Activated CD4-positive, alpha-beta memory T cell treated with anti-CD3 and anti-CD28 coated beads for 36 hours (primary cell): ENCODE measurements at regions of chr7 and their contacts with region 1.

Region 1: GRCh38 chr7:148773334-148773733 is 74.6 kb downstream of the CUL1 start:
- DNase-seq: peak; percentile 57
- H3K4me3 Mint-ChIP-seq: no peak overlapping the region
- H3K27ac Mint-ChIP-seq: peak overlapping the region; percentile 86
- H3K4me1 Mint-ChIP-seq: peaks cover 28% of the 10 kb centered on the region
- H3K27me3 Mint-ChIP-seq: no peaks in the 10 kb centered on the region

Region 2: GRCh38 chr7:148575640-148576411 is 197.5 kb before region 1 on chr7:
- CTCF ChIA-PET with region 1: interaction called, 18 read pairs
- POLR2A ChIA-PET with region 1: no interaction called
- intact Hi-C with region 1: loop called (anchors 5 kb)
- DNase-seq: peak; percentile 80
- H3K4me3 Mint-ChIP-seq: no peak overlapping the region
- H3K27ac Mint-ChIP-seq: no peak overlapping the region
- H3K4me1 Mint-ChIP-seq: peaks cover 6% of the 10 kb centered on the region
- H3K27me3 Mint-ChIP-seq: peaks cover 6% of the 10 kb centered on the region

Region 3: DNA sequence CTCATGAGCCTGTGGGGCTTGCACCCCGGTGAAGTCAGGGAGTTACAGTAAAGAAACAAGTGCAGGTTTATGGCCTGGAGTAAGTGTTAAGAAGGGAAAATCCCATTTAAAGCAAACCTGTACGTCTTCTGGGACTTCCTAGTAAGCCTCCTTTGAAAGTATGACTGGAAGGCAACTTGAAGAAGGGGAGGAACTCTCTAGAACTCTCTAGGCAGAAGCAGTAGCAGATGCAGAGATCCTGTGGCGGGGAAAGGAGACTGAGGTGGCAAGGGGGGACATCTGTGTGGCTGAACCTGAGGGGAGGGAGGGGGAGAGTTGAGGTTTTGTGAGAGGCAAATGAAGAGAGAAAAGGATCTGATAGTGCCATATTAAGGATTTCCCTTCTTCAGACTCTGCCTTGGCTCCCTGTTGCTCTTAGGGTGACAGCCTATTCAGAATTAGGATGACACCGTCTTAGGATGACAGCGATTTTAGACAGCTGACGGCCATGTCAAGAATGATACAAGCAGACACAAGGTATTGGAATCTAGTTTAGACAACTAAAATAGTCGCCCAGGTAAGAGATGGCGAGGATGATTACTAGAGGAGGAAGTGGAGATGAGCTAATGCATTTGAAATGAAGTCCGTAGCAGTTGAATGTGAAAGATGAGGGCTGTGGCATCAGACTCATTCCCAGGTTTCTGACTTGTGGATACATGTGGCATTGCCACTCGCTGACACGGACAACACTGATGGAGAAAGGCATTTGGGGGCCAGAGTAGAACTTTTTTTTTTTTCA is 45.6 kb before region 1 on chr7:
- CTCF ChIA-PET with region 1: no interaction called
- POLR2A ChIA-PET with region 1: no interaction called
- intact Hi-C with region 1: loop called (anchors 2 kb)
- DNase-seq: peak; percentile 62
- H3K4me3 Mint-ChIP-seq: no peak overlapping the region
- H3K27ac Mint-ChIP-seq: peak overlapping the region; percentile 58
- H3K4me1 Mint-ChIP-seq: peaks cover 60% of the 10 kb centered on the region
- H3K27me3 Mint-ChIP-seq: no peaks in the 10 kb centered on the region

Region 4: DNA sequence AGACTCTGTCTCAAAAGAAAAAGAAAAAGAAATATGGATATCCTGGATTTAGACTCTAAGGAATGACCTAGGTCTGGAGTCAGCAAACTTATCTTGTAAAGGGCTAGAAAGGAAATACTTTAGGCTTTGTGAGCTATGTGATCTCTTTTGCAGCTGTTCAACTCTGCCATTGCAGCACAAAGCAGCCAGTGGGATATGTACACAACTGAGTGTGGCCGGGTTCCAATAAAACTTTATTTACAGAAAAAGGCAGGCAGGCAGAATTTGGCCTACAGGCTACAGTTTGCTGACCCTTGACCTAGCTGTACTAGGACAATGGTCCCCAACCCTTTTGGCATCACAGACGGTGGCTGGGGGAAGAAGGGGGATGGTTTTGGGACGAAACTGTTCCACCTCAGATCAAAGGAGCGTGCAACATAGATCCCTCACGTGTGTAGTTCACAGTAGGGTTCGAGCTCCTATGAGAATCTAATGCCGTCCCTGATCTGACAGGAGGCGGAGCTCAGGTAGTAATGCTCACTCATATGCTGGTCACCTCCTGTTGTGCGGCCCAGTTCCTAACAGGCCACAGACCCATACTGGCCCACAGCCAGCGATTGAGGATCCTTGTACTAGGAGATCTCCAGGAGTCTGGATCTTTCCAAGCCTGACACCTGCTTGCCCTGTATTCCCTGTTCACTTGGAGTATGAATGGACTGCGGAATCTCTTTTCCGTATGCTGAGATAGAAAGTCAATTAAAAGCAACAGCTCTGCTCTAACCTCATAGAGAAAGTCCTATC is 11.6 kb before region 1 on chr7:
- CTCF ChIA-PET with region 1: no interaction called
- POLR2A ChIA-PET with region 1: no interaction called
- intact Hi-C with region 1: no loop called
- DNase-seq: no peak
- H3K4me3 Mint-ChIP-seq: no peak overlapping the region
- H3K27ac Mint-ChIP-seq: no peak overlapping the region
- H3K4me1 Mint-ChIP-seq: no peaks in the 10 kb centered on the region
- H3K27me3 Mint-ChIP-seq: no peaks in the 10 kb centered on the region

Region 5: GRCh38 chr7:148893071-148893470 is 119.7 kb after region 1 on chr7:
- CTCF ChIA-PET with region 1: no interaction called
- POLR2A ChIA-PET with region 1: no interaction called
- intact Hi-C with region 1: no loop called
- DNase-seq: no peak
- H3K4me3 Mint-ChIP-seq: no peak overlapping the region
- H3K27ac Mint-ChIP-seq: no peak overlapping the region
- H3K4me1 Mint-ChIP-seq: peaks cover 7% of the 10 kb centered on the region
- H3K27me3 Mint-ChIP-seq: peaks cover 2% of the 10 kb centered on the region